ENCODE measurements at regions of chr5 and their contacts with region 1.

Region 1: GRCh38 chr5:115522832-115523403 is 21.7 kb downstream of the FEM1C start:
- DNase-seq: no peak
- ATAC-seq: no peak
- H3K4me3 ChIP-seq: no peak overlapping the region
- H3K4me3 Mint-ChIP-seq: peak overlapping the region; percentile 29
- H3K27ac ChIP-seq: no peak overlapping the region
- H3K27ac Mint-ChIP-seq: peak overlapping the region; percentile 38
- H3K4me1 ChIP-seq: peaks cover 11% of the 10 kb centered on the region
- H3K4me1 Mint-ChIP-seq: peaks cover 37% of the 10 kb centered on the region
- H3K27me3 ChIP-seq: no peaks in the 10 kb centered on the region
- H3K27me3 Mint-ChIP-seq: no peaks in the 10 kb centered on the region
- CTCF ChIP-seq: no peak

Region 2: GRCh38 chr5:115460472-115460871 is 62.4 kb before region 1 on chr5:
- CTCF ChIA-PET with region 1: no interaction called
- POLR2A ChIA-PET with region 1: no interaction called
- intact Hi-C with region 1: no loop called
- DNase-seq: peak in 1 of 9 experiments; percentile 2
- ATAC-seq: no peak
- H3K4me3 ChIP-seq: no peak overlapping the region
- H3K4me3 Mint-ChIP-seq: no peak overlapping the region
- H3K27ac ChIP-seq: no peak overlapping the region
- H3K27ac Mint-ChIP-seq: no peak overlapping the region
- H3K4me1 ChIP-seq: no peaks in the 10 kb centered on the region
- H3K4me1 Mint-ChIP-seq: no peaks in the 10 kb centered on the region
- H3K27me3 ChIP-seq: no peaks in the 10 kb centered on the region
- H3K27me3 Mint-ChIP-seq: peaks cover 18% of the 10 kb centered on the region
- CTCF ChIP-seq: no peak

Region 3: GRCh38 chr5:115535479-115536035 is 12.6 kb after region 1 on chr5:
- CTCF ChIA-PET with region 1: interaction called, 3 read pairs
- POLR2A ChIA-PET with region 1: interaction called, 3 read pairs
- intact Hi-C with region 1: loop called in 1 of 2 experiments (anchors 2 kb)
- DNase-seq: no peak
- ATAC-seq: no peak
- H3K4me3 ChIP-seq: no peak overlapping the region
- H3K4me3 Mint-ChIP-seq: no peak overlapping the region
- H3K27ac ChIP-seq: no peak overlapping the region
- H3K27ac Mint-ChIP-seq: no peak overlapping the region
- H3K4me1 ChIP-seq: peaks cover 31% of the 10 kb centered on the region
- H3K4me1 Mint-ChIP-seq: peaks cover 89% of the 10 kb centered on the region
- H3K27me3 ChIP-seq: no peaks in the 10 kb centered on the region
- H3K27me3 Mint-ChIP-seq: no peaks in the 10 kb centered on the region
- CTCF ChIP-seq: no peak